Naive thymus-derived CD4-positive, alpha-beta T cell (primary cell): ENCODE measurements at regions of chr3 and their contacts with region 1.

Region 1: DNA sequence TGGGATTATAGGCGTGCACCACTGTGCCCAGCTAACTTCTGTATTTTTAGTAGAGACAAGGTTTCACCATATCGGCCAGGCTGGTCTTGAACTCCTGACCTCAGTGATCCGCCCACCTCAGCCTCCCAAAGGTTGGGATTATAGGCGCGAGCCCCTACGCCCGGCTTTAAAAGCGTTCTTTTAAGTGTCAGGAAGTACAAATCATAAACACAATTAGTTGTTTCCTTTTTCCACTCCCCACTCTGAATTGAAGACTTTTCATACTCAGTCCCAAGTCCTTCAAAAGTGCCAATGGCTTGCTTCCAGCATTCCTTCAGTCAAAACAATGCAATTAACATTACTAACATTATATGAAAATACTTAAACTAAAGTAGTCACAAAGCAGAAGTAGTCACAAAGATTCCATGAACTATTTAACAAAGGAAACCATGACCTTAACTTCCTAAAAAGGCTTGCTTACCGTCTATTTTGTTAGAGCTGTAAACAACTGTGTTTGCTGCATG is 8.1 kb downstream of the WDR82 start:
- DNase-seq: no peak
- ATAC-seq: peak; percentile 28
- H3K4me3 ChIP-seq: peak overlapping the region; percentile 57
- H3K4me3 Mint-ChIP-seq: peak overlapping the region; percentile 68 to 99 (median 90)
- H3K27ac ChIP-seq: peak overlapping the region; percentile 96
- H3K27ac Mint-ChIP-seq: peak overlapping the region; percentile 79 to 99 (median 96)
- H3K4me1 ChIP-seq: peaks cover 42 to 67% of the 10 kb centered on the region in 2 donors
- H3K4me1 Mint-ChIP-seq: peaks cover 55 to 92% (median 87%) of the 10 kb centered on the region in 7 donors
- H3K27me3 ChIP-seq: no peaks in the 10 kb centered on the region
- H3K27me3 Mint-ChIP-seq: no peaks in the 10 kb centered on the region

Region 2: DNA sequence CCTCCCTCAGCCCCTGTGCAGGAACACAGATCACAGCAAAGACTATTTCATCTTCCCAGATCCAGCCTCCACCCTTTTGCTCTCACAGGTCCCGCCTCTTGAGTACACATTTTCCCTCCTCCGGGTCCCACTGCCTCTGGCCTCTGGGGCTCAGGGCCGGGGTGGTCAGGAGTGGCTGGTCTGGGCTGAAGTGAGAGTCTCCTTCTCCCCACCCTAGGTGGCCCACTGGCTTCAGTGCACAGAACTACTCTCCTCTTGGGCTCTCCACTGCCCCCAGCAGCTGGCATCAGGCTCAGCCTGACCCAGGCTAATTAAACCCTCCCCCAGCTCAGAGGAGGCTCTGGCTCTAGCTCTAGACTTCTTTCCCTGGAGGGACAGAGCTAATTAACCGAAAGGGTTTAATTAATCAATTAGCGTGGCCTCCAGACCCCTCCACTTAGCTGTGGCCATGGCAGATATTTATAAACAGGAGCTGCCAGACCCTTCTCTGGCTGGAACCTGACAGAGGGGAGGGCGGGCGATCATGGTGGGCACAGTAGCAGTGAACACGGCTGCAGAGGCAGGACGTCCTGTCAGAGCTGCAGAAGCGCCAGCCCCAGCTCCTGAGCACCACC is 229.1 kb before region 1 on chr3:
- CTCF ChIA-PET with region 1: no interaction called
- POLR2A ChIA-PET with region 1: no interaction called
- intact Hi-C with region 1: no loop called
- DNase-seq: no peak
- ATAC-seq: no peak
- H3K4me3 ChIP-seq: no peak overlapping the region
- H3K4me3 Mint-ChIP-seq: no peak overlapping the region
- H3K27ac ChIP-seq: no peak overlapping the region
- H3K27ac Mint-ChIP-seq: peak overlapping the region in 3 of 9 donors; percentile 28 to 72 (median 41)
- H3K4me1 ChIP-seq: no peaks in the 10 kb centered on the region
- H3K4me1 Mint-ChIP-seq: peaks cover 0 to 34% (median 27%) of the 10 kb centered on the region in 7 donors
- H3K27me3 ChIP-seq: no peaks in the 10 kb centered on the region
- H3K27me3 Mint-ChIP-seq: peaks cover 0 to 9% (median 0%) of the 10 kb centered on the region in 5 donors

Region 3: DNA sequence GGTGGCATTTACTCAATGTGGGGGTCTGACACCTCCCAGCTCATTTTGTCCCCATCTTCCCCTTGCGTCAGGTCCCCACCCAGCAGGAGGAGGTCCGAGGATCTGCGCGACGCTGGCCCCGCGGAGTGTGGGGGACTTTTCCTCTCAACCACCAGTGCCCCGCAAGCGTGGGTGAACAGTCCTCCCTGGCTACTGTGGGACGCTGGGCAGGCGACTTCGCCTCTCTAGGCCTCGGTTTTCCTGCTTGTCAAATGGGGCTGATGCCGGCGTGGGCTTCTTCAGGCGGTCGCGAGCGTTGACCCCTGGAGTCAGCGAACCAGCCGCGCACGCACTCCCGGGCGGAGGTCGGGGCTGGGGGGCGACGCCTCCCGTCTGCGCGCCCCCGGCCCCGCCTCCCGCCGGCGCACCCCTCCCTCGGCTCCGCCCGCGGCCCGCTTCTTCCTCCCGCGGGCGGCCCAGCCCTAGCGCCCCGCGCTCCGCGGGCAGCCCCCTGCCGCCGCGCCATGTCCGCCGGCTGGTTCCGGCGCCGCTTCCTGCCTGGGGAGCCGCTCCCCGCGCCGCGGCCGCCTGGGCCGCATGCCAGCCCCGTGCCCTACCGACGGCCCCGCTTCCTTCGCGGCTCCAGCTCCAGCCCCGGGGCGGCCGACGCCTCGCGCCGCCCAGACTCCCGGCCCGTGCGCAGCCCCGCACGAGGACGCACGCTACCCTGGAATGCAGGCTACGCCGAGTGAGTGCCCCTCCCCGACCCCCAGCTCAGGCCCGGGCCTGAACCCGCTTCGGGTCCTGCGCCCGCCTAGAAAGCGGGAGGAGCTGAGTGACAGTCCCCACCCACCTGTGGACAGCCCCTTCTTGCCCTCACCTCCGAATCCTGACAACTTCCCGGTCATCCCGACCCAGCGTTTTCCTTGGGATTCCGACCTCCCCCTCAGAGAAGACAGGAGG is 24.7 kb before region 1 on chr3 and contains the start of gene PPM1M:
- CTCF ChIA-PET with region 1: interaction called, 126 read pairs
- POLR2A ChIA-PET with region 1: interaction called, 1,418 read pairs
- intact Hi-C with region 1: loop called (anchors 1 to 2 kb)
- DNase-seq: peak; percentile 57 to 77 (median 73)
- ATAC-seq: peak; percentile 72
- H3K4me3 ChIP-seq: peak within 1 kb of the TSS; percentile 79
- H3K4me3 Mint-ChIP-seq: peak within 1 kb of the TSS; percentile 83 to 91 (median 87)
- H3K27ac ChIP-seq: peak within 1 kb of the TSS; percentile 91
- H3K27ac Mint-ChIP-seq: peak within 1 kb of the TSS; percentile 83 to 99 (median 95)
- H3K4me1 ChIP-seq: peaks cover 48 to 81% of the 10 kb centered on the region in 2 donors
- H3K4me1 Mint-ChIP-seq: peaks cover 36 to 91% (median 84%) of the 10 kb centered on the region in 7 donors
- H3K27me3 ChIP-seq: no peaks in the 10 kb centered on the region
- H3K27me3 Mint-ChIP-seq: no peaks in the 10 kb centered on the region
- total RNA-seq, gene PPM1M: 55.8 to 81.0 (median 74.5) TPM

Region 4: DNA sequence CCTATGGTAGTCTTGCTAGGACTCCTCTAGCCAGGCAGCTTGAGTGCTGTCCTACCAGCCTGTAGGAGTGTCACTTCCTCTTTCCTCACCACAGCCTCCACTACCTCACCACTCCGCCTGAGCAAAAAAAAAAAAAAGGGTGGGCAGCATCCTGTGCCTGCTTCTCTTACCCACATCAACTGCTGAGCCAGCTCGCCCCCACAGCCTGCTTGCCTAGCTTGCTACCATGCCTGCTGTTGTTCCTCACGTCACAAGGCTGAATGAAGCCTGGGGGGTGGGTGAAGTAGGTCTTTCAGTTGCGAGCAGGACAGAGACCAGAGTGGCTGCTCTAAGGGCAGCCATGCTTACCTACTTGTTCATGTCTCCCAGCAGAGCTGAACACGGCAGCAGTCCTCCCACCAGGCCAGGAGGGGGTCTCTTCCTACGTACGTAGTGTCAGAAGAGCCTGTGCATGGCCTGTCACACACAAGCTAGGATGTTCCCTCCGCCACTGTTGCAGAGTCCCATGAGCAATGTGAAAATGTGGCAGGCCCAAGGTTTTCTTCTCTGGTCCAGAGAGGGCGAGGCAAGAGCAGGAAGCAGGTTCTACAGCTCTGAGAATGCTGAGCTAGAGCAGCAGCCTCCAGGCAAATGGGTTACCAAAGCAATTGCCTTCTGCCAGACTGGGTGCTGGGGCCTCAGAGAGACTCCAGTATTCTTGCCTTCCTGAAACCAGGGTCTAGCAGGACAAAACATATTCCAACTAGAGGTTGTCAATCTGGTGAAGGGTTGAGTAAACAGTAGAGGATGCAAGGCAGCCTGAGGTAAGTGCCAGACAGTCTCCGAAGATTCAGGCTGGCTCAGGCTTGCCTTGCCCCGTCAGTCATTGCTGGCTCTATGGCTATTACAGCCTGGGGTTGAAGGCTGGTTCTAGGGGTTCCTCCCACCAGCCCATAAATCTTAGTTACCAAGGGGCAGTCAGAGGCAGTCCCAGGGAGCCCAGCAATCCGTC is 16.7 kb before region 1 on chr3:
- CTCF ChIA-PET with region 1: interaction called, 17 read pairs
- POLR2A ChIA-PET with region 1: interaction called, 1,418 read pairs
- intact Hi-C with region 1: loop called (anchors 1 kb)
- DNase-seq: peak in 8 of 9 donors; percentile 81 to 95 (median 94)
- ATAC-seq: peak; percentile 95
- H3K4me3 ChIP-seq: peak overlapping the region; percentile 38
- H3K4me3 Mint-ChIP-seq: peak overlapping the region; percentile 82 to 97 (median 86)
- H3K27ac ChIP-seq: peak overlapping the region; percentile 87
- H3K27ac Mint-ChIP-seq: peak overlapping the region; percentile 92 to 100 (median 98)
- H3K4me1 ChIP-seq: peaks cover 55 to 91% of the 10 kb centered on the region in 2 donors
- H3K4me1 Mint-ChIP-seq: peaks cover 46 to 99% (median 92%) of the 10 kb centered on the region in 7 donors
- H3K27me3 ChIP-seq: no peaks in the 10 kb centered on the region
- H3K27me3 Mint-ChIP-seq: peaks cover 0 to 4% (median 0%) of the 10 kb centered on the region in 5 donors

Region 5: GRCh38 chr3:52259035-52259434 is 11.3 kb before region 1 on chr3:
- CTCF ChIA-PET with region 1: interaction called, 17 read pairs
- POLR2A ChIA-PET with region 1: interaction called, 1,418 read pairs
- intact Hi-C with region 1: loop called (anchors 1 kb)
- DNase-seq: no peak
- ATAC-seq: no peak
- H3K4me3 ChIP-seq: no peak overlapping the region
- H3K4me3 Mint-ChIP-seq: peak overlapping the region in 5 of 10 donors; percentile 23 to 84 (median 27)
- H3K27ac ChIP-seq: peak overlapping the region; percentile 87
- H3K27ac Mint-ChIP-seq: peak overlapping the region; percentile 75 to 99 (median 92)
- H3K4me1 ChIP-seq: peaks cover 47 to 90% of the 10 kb centered on the region in 2 donors
- H3K4me1 Mint-ChIP-seq: peaks cover 61 to 100% (median 93%) of the 10 kb centered on the region in 7 donors
- H3K27me3 ChIP-seq: no peaks in the 10 kb centered on the region
- H3K27me3 Mint-ChIP-seq: no peaks in the 10 kb centered on the region

Region 6: DNA sequence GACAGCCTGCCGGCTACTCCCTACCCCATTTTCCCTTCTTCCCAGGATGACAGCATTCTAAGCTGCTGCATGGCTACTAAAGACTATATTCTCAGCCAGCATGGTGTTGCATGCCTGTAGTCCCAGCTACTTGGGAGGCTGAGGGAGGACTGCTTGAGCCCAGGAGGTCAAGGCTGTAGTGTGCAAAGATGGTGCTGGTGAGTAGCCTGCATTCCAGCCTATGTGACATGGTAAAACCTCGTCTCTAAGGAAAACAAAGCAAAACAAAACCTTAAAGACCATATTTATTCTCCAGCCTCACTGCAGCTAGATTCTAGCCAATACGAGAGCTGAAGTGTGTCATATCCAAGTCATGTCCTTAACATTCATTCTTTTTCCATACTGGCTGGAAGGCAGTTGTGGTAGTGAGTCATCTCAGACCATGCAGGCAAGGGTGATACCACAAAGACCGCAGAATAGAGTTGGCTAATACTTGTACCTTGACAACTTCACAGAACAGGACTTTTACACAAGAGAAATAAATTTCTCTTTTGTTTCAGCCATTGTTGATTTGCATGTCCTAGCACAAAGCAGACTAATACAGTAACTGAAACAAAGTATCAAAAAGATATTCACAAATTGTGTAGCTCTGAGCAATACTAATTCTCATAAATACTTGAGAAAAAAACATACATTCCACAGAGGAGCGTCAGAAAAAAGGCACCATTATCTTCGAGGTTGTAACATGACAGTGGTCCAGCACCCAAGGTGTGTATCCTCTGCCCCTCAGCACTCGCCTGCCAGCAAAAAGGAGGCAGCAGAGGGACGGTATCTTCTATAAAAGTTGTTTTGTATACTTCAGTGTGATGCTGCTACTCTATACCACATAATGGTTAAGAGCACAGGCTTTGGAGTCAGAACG is 400.6 kb after region 1 on chr3:
- CTCF ChIA-PET with region 1: no interaction called
- POLR2A ChIA-PET with region 1: no interaction called
- intact Hi-C with region 1: no loop called
- DNase-seq: peak in 1 of 9 donors; percentile 56
- ATAC-seq: peak; percentile 89
- H3K4me3 ChIP-seq: no peak overlapping the region
- H3K4me3 Mint-ChIP-seq: peak overlapping the region in 1 of 10 donors; percentile 62
- H3K27ac ChIP-seq: no peak overlapping the region
- H3K27ac Mint-ChIP-seq: peak overlapping the region in 6 of 9 donors; percentile 25 to 85 (median 45)
- H3K4me1 ChIP-seq: peaks cover 0 to 14% of the 10 kb centered on the region in 2 donors
- H3K4me1 Mint-ChIP-seq: peaks cover 14 to 31% (median 24%) of the 10 kb centered on the region in 7 donors
- H3K27me3 ChIP-seq: no peaks in the 10 kb centered on the region
- H3K27me3 Mint-ChIP-seq: no peaks in the 10 kb centered on the region